A673 (cell line): ENCODE measurements at regions of chr17 and their contacts with region 1.

Region 1: GRCh38 chr17:7194056-7194455 is 14.9 kb upstream of the ASGR1 start:
- DNase-seq: no peak
- H3K4me3 ChIP-seq: no peak overlapping the region
- H3K27ac ChIP-seq: no peak overlapping the region
- H3K4me1 ChIP-seq: no peaks in the 10 kb centered on the region
- H3K27me3 ChIP-seq: no peaks in the 10 kb centered on the region
- CTCF ChIP-seq: no peak

Region 2: DNA sequence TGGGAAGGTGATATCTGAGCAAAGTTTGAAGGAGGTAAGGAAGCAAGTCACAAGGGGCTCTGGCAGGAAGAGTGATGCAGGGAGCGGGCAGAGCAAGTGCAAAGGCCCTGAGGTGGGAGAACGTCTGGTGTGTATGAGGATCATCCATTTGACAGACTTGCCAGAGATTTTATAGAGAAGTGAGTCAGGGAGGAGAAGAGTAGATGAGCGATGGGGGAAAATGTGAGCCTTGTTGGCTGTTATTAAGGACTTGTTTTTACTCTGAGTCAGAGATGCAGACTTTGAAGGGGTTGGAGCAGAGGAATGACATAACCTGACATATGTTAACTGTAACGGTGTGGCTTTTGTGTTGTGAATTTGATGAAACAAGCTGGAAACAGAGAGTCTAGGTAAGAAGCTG is 110.5 kb before region 1 on chr17:
- CTCF ChIA-PET with region 1: no interaction called
- POLR2A ChIA-PET with region 1: interaction called, 13 read pairs
- intact Hi-C with region 1: no loop called
- DNase-seq: no peak
- H3K4me3 ChIP-seq: no peak overlapping the region
- H3K27ac ChIP-seq: no peak overlapping the region
- H3K4me1 ChIP-seq: peaks cover 4% of the 10 kb centered on the region
- H3K27me3 ChIP-seq: no peaks in the 10 kb centered on the region
- CTCF ChIP-seq: no peak